Right ventricle myocardium inferior (tissue), 1 donor: ENCODE measurements at regions of chr21 and their contacts with region 1.

Region 1: GRCh38 chr21:23624281-23624680 is 1983.0 kb downstream of the MRPL39 start:
- DNase-seq: no peak
- ATAC-seq: peak; percentile 78

Region 2: DNA sequence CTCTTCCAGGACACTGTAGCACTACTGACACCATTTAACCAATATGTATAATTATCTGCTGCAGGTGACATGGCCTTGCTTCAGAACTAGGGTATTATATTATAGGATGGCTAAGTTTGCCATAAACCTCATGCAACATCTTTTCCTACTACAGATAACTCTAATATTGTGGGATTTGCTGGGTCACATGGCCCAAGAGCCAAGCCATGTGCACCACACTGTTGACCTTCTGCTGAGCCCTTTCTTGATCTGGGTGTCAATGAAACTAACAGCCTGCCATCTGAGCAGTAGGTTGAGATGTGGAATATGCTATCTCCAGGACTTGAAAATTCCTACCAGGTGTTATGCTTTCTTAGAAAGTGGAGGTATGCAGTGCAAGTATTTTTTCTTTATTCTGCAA is 308.1 kb before region 1 on chr21:
- intact Hi-C with region 1: no loop called
- DNase-seq: no peak
- ATAC-seq: no peak

Region 3: DNA sequence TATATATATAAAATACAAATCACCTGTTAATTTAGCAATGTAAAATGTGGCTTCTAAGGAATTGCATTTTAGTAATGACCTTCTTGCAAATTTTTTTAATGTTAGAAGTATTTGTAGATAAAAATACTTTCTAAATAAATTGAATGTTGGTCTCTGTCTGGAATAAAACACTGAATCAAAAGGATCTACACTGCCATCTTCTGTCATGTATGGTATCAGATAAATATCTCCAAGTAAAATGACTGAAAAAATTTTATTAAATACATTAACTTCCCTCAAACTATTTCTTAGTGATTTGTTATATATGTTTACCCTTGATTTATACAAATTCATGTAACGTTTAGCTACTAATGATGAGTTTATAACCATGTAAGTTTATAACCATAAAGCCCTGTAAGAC is 46.3 kb before region 1 on chr21:
- intact Hi-C with region 1: loop called (anchors 2 kb)
- DNase-seq: no peak
- ATAC-seq: no peak